ENCODE measurements at regions of chr1 and their contacts with region 1.

Region 1: GRCh38 chr1:161132410-161133219 is at the start of gene DEDD:
- DNase-seq: peak; percentile 96
- ATAC-seq: peak; percentile 91
- H3K4me3 ChIP-seq: peak within 1 kb of the TSS; percentile 85 to 100 (median 92)
- H3K4me3 Mint-ChIP-seq: no peak within 1 kb of the TSS
- H3K27ac ChIP-seq: peak within 1 kb of the TSS; percentile 83 to 89
- H3K27ac Mint-ChIP-seq: no peak within 1 kb of the TSS
- H3K4me1 ChIP-seq: peaks cover 18 to 27% of the 10 kb centered on the region in 2 donors
- H3K4me1 Mint-ChIP-seq: peaks cover 41% of the 10 kb centered on the region
- H3K27me3 ChIP-seq: no peaks in the 10 kb centered on the region
- H3K27me3 Mint-ChIP-seq: no peaks in the 10 kb centered on the region
- CTCF ChIP-seq: no peak
- total RNA-seq, gene DEDD: 40.8 and 46.0 TPM in 2 replicates

Region 2: DNA sequence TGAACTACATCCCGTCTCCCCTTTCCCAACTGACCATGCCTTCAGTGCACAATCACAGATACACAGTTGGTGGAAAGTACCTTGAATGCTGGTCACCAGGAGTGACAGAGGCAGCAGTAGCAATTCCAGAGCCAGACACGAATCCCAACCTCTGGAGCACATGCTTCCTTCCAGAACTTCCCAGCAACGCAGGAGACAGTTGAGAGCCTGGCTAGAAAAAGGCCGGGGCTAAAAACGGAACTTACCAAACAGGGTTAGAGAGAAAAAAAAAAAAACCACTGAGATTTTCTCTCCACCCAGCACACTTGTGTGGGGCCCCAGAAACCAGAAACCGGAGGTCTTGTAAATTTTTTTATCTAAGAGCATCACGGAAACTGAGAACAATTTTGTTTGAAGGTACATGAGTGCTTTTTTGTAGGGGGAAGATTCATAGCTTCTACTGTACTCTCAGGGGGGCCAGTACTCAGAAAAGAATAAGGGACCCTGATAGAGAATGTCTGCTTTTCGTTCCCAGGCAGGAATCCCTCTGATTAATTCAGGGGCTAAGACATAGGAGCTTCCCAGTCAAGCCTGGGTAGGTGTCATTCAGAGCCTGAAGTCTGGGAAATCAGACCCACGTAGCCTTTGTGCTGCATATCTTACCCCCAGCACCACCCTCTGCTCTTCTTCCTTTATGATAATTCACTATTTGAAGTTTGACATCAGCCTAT is 420.9 kb before region 1 on chr1 and contains the start of gene CD48:
- CTCF ChIA-PET with region 1: no interaction called
- POLR2A ChIA-PET with region 1: no interaction called
- intact Hi-C with region 1: loop called (anchors 10 kb)
- DNase-seq: peak; percentile 80
- ATAC-seq: peak; percentile 54
- H3K4me3 ChIP-seq: peak within 1 kb of the TSS; percentile 87 to 100 (median 98)
- H3K4me3 Mint-ChIP-seq: no peak within 1 kb of the TSS
- H3K27ac ChIP-seq: peak within 1 kb of the TSS; percentile 89 to 95
- H3K27ac Mint-ChIP-seq: no peak within 1 kb of the TSS
- H3K4me1 ChIP-seq: peaks cover 62 to 64% of the 10 kb centered on the region in 2 donors
- H3K4me1 Mint-ChIP-seq: peaks cover 26% of the 10 kb centered on the region
- H3K27me3 ChIP-seq: no peaks in the 10 kb centered on the region
- H3K27me3 Mint-ChIP-seq: no peaks in the 10 kb centered on the region
- CTCF ChIP-seq: no peak
- total RNA-seq, gene CD48: 252 and 255 TPM in 2 replicates

Region 3: GRCh38 chr1:161045750-161046571 is 86.7 kb before region 1 on chr1 and contains the start of gene USF1:
- CTCF ChIA-PET with region 1: interaction called, 4 read pairs
- POLR2A ChIA-PET with region 1: interaction called, 5 read pairs
- intact Hi-C with region 1: loop called (anchors 1 kb)
- DNase-seq: peak; percentile 98
- ATAC-seq: peak; percentile 67
- H3K4me3 ChIP-seq: peak within 1 kb of the TSS; percentile 67 to 100 (median 95)
- H3K4me3 Mint-ChIP-seq: peak within 1 kb of the TSS; percentile 99
- H3K27ac ChIP-seq: peak within 1 kb of the TSS; percentile 99
- H3K27ac Mint-ChIP-seq: peak within 1 kb of the TSS; percentile 100
- H3K4me1 ChIP-seq: peaks cover 43 to 67% of the 10 kb centered on the region in 2 donors
- H3K4me1 Mint-ChIP-seq: peaks cover 67% of the 10 kb centered on the region
- H3K27me3 ChIP-seq: no peaks in the 10 kb centered on the region
- H3K27me3 Mint-ChIP-seq: no peaks in the 10 kb centered on the region
- CTCF ChIP-seq: no peak
- total RNA-seq, gene USF1: 192 and 196 TPM in 2 replicates

Region 4: GRCh38 chr1:161098210-161099068 is 34.2 kb before region 1 on chr1 and contains the start of gene KLHDC9:
- CTCF ChIA-PET with region 1: interaction called, 6 read pairs
- POLR2A ChIA-PET with region 1: no interaction called
- intact Hi-C with region 1: loop called (anchors 1 kb)
- DNase-seq: peak; percentile 87
- ATAC-seq: peak; percentile 80
- H3K4me3 ChIP-seq: peak within 1 kb of the TSS; percentile 51 to 71 (median 60)
- H3K4me3 Mint-ChIP-seq: peak within 1 kb of the TSS; percentile 94
- H3K27ac ChIP-seq: peak within 1 kb of the TSS; percentile 45 to 57
- H3K27ac Mint-ChIP-seq: peak within 1 kb of the TSS; percentile 96
- H3K4me1 ChIP-seq: peaks cover 16 to 31% of the 10 kb centered on the region in 2 donors
- H3K4me1 Mint-ChIP-seq: peaks cover 33% of the 10 kb centered on the region
- H3K27me3 ChIP-seq: no peaks in the 10 kb centered on the region
- H3K27me3 Mint-ChIP-seq: no peaks in the 10 kb centered on the region
- CTCF ChIP-seq: no peak
- total RNA-seq, gene KLHDC9: 1.6 and 4.2 TPM in 2 replicates

Region 5: GRCh38 chr1:161153679-161154426 is 21.2 kb after region 1 on chr1 and contains the start of gene UFC1:
- CTCF ChIA-PET with region 1: interaction called, 7 read pairs
- POLR2A ChIA-PET with region 1: interaction called, 5 read pairs
- intact Hi-C with region 1: loop called (anchors 1 kb)
- DNase-seq: peak; percentile 94
- ATAC-seq: peak; percentile 97
- H3K4me3 ChIP-seq: peak within 1 kb of the TSS; percentile 88 to 100 (median 90)
- H3K4me3 Mint-ChIP-seq: peak within 1 kb of the TSS; percentile 97
- H3K27ac ChIP-seq: peak within 1 kb of the TSS; percentile 95 to 98
- H3K27ac Mint-ChIP-seq: peak within 1 kb of the TSS; percentile 99
- H3K4me1 ChIP-seq: peaks cover 15 to 17% of the 10 kb centered on the region in 2 donors
- H3K4me1 Mint-ChIP-seq: peaks cover 26% of the 10 kb centered on the region
- H3K27me3 ChIP-seq: no peaks in the 10 kb centered on the region
- H3K27me3 Mint-ChIP-seq: no peaks in the 10 kb centered on the region
- CTCF ChIP-seq: no peak
- total RNA-seq, gene UFC1: 78.1 and 91.0 TPM in 2 replicates

Region 6: DNA sequence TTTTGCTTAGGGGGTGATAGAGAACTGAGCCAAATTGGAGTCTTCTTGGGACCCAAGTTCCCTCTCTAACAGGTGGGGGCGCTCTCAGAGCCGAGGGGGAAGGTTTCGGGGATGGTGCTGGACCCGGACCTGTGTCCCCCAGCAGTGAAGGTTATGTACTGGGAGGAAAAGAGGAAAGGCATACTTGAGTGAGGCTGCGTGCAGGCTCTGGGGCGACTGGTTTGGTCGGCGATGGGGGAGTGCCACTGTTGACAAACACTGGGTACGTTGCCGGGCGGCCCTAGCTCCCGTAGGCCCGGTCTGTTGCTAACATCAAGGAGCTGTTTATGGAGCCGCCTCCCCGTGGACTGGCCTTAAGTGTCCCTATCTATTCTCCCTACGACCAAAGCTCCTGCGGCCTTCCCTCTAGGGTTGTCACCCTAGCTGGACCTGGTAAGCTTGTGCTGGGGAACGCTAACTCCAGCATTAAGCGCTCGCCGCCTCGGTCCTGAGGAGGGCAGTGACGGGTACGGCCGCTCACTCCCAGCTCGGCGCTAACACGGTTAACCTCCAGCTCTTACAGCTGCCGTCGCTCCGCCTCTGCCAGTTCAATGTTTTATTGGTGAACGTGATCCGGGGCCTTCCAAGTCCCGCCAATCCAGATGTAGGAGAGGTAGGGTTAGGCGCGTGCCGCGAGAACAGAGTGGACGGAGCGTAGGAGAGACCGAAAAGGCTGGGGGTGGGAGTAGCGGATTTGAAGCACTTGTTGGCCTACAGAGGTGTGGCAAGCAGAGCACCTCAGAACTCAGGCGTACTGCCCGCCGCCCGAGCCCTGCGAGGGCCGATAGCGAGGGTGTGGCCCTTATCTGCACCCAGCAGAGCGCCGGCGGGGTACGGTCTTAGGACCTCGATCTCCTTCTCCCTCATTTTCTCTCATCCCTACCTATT is 33.4 kb after region 1 on chr1 and contains the start of gene PPOX:
- CTCF ChIA-PET with region 1: interaction called, 10 read pairs
- POLR2A ChIA-PET with region 1: interaction called, 4 read pairs
- intact Hi-C with region 1: loop called (anchors 1 kb)
- DNase-seq: peak; percentile 95
- ATAC-seq: peak; percentile 94
- H3K4me3 ChIP-seq: peak within 1 kb of the TSS; percentile 48 to 82 (median 69)
- H3K4me3 Mint-ChIP-seq: peak within 1 kb of the TSS; percentile 91
- H3K27ac ChIP-seq: peak within 1 kb of the TSS; percentile 89 to 92
- H3K27ac Mint-ChIP-seq: peak within 1 kb of the TSS; percentile 99
- H3K4me1 ChIP-seq: peaks cover 20 to 26% of the 10 kb centered on the region in 2 donors
- H3K4me1 Mint-ChIP-seq: peaks cover 47% of the 10 kb centered on the region
- H3K27me3 ChIP-seq: no peaks in the 10 kb centered on the region
- H3K27me3 Mint-ChIP-seq: no peaks in the 10 kb centered on the region
- CTCF ChIP-seq: peak; percentile 68
- total RNA-seq, gene PPOX: 61.7 and 65.6 TPM in 2 replicates

Region 7: DNA sequence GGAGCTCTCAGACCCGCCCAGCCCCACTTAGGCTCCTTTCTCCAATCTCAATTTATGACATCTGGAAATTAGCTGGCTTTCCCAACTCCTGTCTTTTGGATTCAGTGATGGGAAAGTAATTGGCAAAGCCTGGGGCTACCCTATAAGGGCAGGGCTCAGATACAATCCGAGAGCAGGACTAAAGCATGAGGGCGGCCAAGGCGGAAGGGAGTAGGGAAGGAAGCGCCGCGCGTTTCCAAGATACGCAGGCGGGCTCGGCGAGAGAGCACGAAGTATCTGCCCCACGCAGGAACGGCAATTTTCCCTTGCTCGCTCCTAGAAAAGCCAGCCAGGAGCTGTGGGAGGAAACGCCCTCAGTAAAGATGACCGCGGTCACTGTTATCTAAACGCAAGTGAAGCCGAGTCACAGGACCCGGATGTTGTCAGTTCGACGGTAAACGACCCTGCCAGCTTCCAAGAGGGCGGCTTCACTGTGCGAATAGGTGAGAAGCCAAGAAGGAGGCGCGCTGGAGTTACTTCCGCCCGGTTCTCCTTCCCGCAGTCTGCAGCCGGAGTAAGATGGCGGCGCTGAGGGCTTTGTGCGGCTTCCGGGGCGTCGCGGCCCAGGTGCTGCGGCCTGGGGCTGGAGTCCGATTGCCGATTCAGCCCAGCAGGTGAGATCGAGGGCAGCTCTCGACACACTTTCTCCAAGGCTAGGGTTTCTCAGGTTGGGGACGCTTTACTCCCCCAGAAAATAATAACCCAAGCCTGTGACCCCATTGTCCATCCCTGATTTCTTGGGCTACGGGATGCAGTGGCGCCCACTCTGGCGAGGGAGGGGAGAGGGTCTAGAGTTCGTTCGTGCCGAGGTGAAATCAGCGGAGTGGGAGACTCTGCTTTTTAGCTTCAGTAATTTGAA is 69.5 kb after region 1 on chr1 and contains the start of gene NDUFS2:
- CTCF ChIA-PET with region 1: interaction called, 3 read pairs
- POLR2A ChIA-PET with region 1: no interaction called
- intact Hi-C with region 1: loop called (anchors 2 kb)
- DNase-seq: peak; percentile 97
- ATAC-seq: peak; percentile 98
- H3K4me3 ChIP-seq: peak within 1 kb of the TSS; percentile 77 to 99 (median 88)
- H3K4me3 Mint-ChIP-seq: peak within 1 kb of the TSS; percentile 96
- H3K27ac ChIP-seq: peak within 1 kb of the TSS; percentile 81 to 88
- H3K27ac Mint-ChIP-seq: peak within 1 kb of the TSS; percentile 97
- H3K4me1 ChIP-seq: peaks cover 16 to 26% of the 10 kb centered on the region in 2 donors
- H3K4me1 Mint-ChIP-seq: peaks cover 36% of the 10 kb centered on the region
- H3K27me3 ChIP-seq: no peaks in the 10 kb centered on the region
- H3K27me3 Mint-ChIP-seq: no peaks in the 10 kb centered on the region
- CTCF ChIP-seq: no peak
- total RNA-seq, gene NDUFS2: 80.2 and 82.3 TPM in 2 replicates